Heart right ventricle (tissue), 16 donors: ENCODE measurements at regions of chrX and their contacts with region 1.

Region 1: DNA sequence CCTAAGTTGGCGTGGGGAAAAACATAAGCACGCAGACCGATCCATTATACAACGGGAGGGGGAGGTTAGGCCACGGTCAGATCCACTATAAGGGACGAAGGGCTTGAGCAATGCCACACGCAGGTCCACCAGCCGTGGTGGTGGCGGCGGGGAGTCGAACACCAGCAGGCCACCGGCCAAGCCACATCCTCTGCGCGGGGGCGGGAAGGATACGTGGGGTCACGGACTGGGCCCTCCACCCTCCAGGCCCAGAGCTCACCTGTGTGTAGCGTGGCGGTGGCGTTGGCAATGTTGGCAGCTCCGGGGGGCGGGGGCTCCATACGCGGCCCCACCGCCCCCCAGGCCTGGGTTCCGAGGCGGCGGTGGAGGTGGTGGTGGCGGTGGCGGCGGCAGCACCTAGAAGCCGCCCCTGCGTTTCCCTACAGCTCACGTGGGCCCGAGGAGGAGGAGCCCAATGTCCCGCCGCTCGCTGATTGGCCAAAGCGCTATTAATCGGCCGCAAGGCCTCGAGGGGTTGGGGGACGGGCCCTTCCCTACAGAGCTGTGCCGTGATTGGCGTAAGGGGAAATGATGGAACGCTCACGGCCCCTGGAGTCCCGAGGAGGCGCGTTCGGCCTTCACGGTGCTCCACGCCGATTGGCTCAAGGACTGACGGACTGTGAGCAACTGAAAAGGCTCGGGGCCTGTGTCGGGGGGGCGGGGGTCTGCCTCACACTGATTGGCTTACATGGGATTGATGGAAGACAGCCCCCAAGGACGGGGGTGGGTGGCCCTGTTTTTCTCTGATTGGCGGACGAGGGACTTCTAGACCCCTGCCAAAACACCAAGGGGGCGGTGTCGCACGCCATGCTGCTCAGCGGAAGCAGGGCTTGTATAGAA is at the start of gene ELK1:
- DNase-seq: peak; percentile 91 to 96
- ATAC-seq: peak; percentile 95 to 98 (median 97)
- H3K4me3 ChIP-seq: peak within 1 kb of the TSS; percentile 46 to 78 (median 68)
- H3K27ac ChIP-seq: peak within 1 kb of the TSS; percentile 40 to 89 (median 82)
- H3K4me1 ChIP-seq: peaks cover 0 to 29% (median 8%) of the 10 kb centered on the region in 9 donors
- H3K27me3 ChIP-seq: no peaks in the 10 kb centered on the region
- CTCF ChIP-seq: peak in 1 of 9 donors; percentile 3
- total RNA-seq, gene ELK1: 22.1 to 31.1 (median 24.8) TPM

Region 2: DNA sequence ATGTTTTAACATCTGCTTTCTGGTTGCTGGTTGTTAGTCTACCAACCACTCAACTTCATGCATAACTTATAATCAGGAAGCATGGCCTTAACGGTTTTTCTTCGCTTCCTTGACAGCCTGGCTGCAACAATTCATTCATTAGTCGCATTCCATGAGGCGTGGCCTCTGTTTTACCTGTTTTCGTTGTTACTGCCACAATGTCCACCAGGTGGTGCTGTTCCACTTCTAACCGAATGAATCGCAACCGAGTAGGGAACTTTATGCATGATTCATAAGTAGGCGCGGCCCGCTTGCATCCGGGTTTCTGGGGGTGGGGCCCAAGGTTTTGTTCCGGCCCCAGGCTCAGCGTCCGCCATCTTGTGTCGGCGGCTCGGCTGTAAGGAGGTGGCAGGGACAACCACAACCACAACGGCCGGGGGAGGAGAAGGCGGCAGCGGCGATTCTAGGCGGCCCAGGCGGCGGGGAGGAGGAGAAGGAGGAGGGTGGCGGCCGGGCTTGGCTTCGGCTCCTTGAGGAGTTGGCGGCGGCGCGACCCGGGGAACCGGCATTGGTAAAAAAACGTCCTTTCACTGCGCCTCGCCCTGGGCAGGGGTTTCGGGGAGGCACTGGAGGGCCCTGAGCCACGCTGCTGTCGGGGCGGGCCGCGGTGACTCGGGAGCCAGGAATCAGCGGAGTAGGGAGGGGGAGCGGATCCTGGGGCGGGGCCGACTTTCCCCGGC is 456.8 kb before region 1 on chrX and contains the start of gene UBA1:
- intact Hi-C with region 1: loop called in 1 of 10 experiments (anchors 10 kb)
- DNase-seq: peak; percentile 87 to 93
- ATAC-seq: peak; percentile 90 to 95 (median 94)
- H3K4me3 ChIP-seq: peak within 1 kb of the TSS; percentile 63 to 99 (median 82)
- H3K27ac ChIP-seq: peak within 1 kb of the TSS; percentile 84 to 98 (median 96)
- H3K4me1 ChIP-seq: peaks cover 2 to 70% (median 43%) of the 10 kb centered on the region in 9 donors
- H3K27me3 ChIP-seq: peaks cover 0 to 28% (median 0%) of the 10 kb centered on the region in 7 donors
- CTCF ChIP-seq: peak; percentile 48 to 90 (median 74)
- total RNA-seq, gene UBA1: 110 to 157 (median 128) TPM

Region 3: GRCh38 chrX:47217642-47218279 is 432.6 kb before region 1 on chrX:
- intact Hi-C with region 1: loop called in 1 of 10 experiments (anchors 10 kb)
- DNase-seq: peak; percentile 92 to 97
- ATAC-seq: peak; percentile 86 to 94 (median 92)
- H3K4me3 ChIP-seq: peak overlapping the region; percentile 69 to 94 (median 77)
- H3K27ac ChIP-seq: peak overlapping the region; percentile 94 to 99 (median 98)
- H3K4me1 ChIP-seq: peaks cover 0 to 36% (median 24%) of the 10 kb centered on the region in 9 donors
- H3K27me3 ChIP-seq: no peaks in the 10 kb centered on the region
- CTCF ChIP-seq: no peak

Region 4: DNA sequence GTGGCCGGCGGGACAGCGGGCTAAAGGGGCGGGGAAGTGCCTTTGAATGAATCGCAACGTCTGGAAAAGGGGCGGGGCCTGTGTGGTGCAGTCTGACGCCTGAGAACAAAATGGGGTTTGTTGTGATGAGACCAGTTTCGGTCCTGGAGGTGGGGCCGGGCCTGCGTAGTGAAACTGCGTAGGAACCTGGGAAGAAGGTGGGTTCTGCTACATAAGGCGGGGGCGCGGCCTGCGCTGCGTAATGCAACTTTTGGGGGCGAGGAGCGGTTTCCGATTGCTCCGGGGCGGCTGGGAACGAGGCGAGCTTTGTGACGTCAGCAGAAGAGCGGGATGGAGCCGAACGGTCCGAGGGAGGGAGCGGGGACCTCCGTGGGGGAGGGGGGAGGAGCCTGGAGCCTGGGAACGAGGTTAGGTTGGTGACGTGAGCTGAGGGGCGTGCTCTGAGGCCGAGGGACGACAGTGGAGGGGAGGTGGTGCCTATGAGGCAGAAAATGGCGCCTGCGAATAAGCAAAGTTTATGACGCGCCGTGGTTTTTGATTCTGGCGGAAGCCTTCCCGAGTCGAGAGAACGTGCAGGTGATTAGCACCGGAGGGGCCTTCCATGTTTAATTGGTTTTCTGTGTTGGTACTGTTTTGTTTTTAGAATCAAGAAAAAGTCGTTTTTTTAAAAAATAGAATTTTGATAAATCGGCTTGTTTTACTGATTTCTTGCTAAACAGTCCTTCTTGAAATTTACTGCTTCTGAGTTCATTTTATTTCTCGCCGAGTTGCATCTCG is 416.9 kb before region 1 on chrX:
- intact Hi-C with region 1: loop called in 1 of 10 experiments (anchors 10 kb)
- DNase-seq: peak; percentile 92 to 93
- ATAC-seq: peak; percentile 92 to 98 (median 96)
- H3K4me3 ChIP-seq: peak overlapping the region; percentile 41 to 73 (median 68)
- H3K27ac ChIP-seq: peak overlapping the region; percentile 88 to 98 (median 96)
- H3K4me1 ChIP-seq: peaks cover 0 to 23% (median 5%) of the 10 kb centered on the region in 9 donors
- H3K27me3 ChIP-seq: peaks cover 0 to 72% (median 0%) of the 10 kb centered on the region in 7 donors
- CTCF ChIP-seq: no peak

Region 5: DNA sequence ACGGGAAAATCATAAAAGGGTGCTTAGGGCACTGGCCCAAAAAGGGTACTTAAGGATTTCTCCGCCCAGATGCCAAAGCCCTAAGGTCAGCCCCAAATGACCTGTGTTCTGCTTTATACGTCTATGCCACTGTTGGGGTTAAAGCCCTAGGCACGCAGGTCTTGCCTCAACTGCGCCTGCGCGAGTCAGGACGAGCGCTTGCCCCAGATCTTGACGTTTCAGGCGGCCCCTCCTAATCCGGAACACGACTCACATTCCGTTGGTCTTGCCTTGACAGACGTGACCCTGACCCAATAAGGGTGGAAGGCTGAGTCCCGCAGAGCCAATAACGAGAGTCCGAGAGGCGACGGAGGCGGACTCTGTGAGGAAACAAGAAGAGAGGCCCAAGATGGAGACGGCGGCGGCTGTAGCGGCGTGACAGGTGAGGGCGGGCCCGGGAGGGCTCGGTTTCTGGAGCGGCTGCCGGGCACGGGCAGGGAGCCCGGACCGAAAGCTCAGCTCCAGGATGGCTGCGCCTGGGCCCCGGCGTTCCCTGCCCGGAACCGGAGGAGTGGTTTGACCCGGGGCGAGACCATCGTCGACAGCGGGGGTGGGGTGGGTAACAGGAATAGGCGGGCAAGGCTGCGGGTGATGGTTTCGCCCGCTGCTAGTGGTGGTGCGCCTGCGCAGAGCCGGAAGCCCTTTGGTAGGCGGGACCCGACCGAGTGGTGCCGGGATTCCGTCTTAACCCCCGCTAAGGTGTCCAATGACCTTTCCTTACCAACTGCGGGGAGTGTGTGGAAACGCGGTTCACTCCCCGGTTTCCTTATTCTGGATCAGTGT is 89.4 kb before region 1 on chrX and contains the start of gene ARAF:
- intact Hi-C with region 1: loop called in 6 of 10 experiments (anchors 5 to 10 kb)
- DNase-seq: peak; percentile 92 to 98
- ATAC-seq: peak; percentile 93 to 96 (median 95)
- H3K4me3 ChIP-seq: peak within 1 kb of the TSS; percentile 41 to 77 (median 68)
- H3K27ac ChIP-seq: peak within 1 kb of the TSS; percentile 90 to 99 (median 96)
- H3K4me1 ChIP-seq: peaks cover 0 to 40% (median 10%) of the 10 kb centered on the region in 9 donors
- H3K27me3 ChIP-seq: no peaks in the 10 kb centered on the region
- CTCF ChIP-seq: no peak
- total RNA-seq, gene ARAF: 73.0 to 93.1 (median 79.8) TPM

Region 6: DNA sequence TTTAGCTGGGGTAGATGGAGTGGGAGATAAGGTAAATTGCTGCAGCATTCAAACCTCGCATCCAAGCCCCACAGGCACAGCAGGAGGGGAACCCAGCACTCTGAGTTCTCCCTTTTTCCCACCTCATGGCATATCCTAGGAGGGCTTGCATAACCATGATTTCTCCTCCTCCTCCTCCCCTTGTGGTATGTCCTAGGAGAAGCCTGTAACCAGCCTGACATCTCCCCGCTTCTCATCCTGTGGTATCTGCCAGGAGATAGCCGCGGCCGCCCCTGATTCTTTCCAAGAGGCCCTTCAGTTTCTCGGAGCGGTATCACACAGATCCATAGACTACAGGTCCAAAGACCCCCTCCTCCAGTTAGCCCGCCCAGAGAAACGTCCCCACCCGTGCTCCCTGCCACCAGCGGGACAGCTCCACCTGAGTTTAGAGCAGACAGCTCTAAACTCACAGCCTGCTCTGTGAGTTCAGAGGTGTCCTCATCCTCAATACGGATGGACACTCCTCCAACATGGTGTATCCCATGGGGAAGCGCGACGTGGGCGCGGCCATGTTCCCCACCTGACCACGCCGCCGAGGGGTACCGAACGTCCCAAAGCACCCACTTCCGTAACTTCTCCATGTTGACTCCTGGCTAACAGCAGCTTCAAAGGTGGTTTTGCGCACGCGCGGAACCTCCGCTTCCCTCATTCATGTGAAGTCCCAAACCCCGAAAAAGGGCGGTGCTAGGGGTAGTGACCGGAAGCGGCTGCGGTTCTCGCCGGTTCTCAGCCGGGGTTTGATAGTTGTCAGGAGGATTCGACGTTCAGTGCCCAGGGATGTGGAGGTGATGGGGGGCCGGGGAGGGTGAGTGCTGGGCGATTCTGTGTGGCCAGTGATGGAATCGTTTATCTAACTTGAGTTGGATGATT is 186.0 kb after region 1 on chrX and contains the start of gene ZNF81:
- intact Hi-C with region 1: loop called in 2 of 10 experiments (anchors 10 kb)
- DNase-seq: peak; percentile 95 to 96
- ATAC-seq: peak; percentile 98 to 100 (median 99)
- H3K4me3 ChIP-seq: peak within 1 kb of the TSS; percentile 38 to 69 (median 58)
- H3K27ac ChIP-seq: peak within 1 kb of the TSS in 9 of 10 donors; percentile 39 to 82 (median 75)
- H3K4me1 ChIP-seq: peaks cover 0 to 19% (median 6%) of the 10 kb centered on the region in 9 donors
- H3K27me3 ChIP-seq: no peaks in the 10 kb centered on the region
- CTCF ChIP-seq: no peak
- total RNA-seq, gene ZNF81: 4.1 to 10.1 (median 7.3) TPM

Region 7: DNA sequence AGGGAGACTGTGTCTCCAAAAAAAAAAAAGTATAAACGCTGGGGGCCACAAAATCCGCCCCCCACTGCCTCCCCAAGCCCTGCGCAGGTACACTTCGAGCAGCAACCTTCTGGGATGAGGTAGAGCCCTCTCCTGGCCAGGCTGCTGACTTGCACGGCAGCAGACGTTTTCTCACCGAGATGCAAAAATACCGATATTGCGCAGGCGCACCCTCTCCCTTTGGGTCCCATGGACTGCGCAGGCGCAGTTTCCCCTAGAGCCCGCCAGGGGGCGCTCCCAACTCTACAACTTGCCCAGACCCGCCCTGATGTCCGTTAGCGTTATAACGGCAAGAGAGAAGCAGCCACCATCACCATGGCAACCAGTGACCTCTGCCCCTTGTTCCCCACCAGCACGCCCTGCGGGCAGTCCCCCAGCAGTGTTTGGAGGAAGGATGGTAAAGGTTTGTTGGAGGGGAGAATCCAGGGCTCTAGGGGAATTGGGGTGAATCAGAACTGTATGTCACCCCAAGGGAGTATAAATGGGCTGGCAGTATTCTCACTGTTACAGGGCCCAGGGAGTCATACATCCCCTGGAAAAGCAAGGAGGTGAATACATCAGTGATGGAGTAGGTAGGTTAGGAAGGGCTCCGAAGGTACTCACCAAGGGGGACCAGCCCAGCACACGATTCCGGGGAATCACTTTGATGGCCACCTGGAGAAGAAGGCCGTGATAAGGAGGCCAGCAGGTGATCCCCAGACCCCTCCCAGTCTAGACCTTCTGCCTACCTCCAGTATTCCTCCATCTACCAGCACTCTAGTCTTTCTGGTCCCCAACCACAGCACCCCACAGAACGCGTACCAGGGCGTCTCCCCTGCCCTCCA is 1267.0 kb after region 1 on chrX:
- intact Hi-C with region 1: loop called in 1 of 10 experiments (anchors 10 kb)
- DNase-seq: peak; percentile 85 to 86
- ATAC-seq: peak; percentile 61 to 81 (median 73)
- H3K4me3 ChIP-seq: peak overlapping the region in 5 of 10 donors; percentile 7 to 68 (median 32)
- H3K27ac ChIP-seq: peak overlapping the region in 5 of 10 donors; percentile 6 to 91 (median 25)
- H3K4me1 ChIP-seq: peaks cover 0 to 32% (median 4%) of the 10 kb centered on the region in 9 donors
- H3K27me3 ChIP-seq: no peaks in the 10 kb centered on the region
- CTCF ChIP-seq: peak; percentile 79 to 95 (median 92)